Right ventricle myocardium superior (tissue), 1 donor: ENCODE measurements at regions of chr2 and their contacts with region 1.

Region 1: DNA sequence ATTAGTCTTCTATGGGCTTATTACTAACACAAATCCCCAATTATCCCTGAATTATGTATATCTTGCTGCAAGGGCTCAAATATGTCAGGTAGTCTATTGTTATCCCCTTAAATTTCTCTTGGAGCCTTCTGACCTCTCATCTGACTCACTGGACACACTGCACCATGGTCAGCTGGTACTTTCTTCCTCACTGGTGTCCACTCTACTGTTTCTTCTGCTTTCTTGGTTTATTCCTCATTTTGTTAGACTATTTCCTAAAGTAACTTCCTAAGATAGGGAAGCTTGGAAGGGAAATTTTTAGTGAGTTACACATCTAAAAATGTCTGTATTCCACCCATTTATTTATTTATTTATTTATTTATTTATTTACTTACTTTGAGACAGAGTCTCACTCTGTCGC is 26.5 kb downstream of the WDR35 start:
- DNase-seq: no peak
- ATAC-seq: no peak

Region 2: GRCh38 chr2:20015472-20016083 is 52.2 kb after region 1 on chr2:
- intact Hi-C with region 1: loop called (anchors 5 kb)
- DNase-seq: no peak
- ATAC-seq: peak; percentile 61